Calu3 (cell line): ENCODE measurements at regions of chr11 and their contacts with region 1.

Region 1: DNA sequence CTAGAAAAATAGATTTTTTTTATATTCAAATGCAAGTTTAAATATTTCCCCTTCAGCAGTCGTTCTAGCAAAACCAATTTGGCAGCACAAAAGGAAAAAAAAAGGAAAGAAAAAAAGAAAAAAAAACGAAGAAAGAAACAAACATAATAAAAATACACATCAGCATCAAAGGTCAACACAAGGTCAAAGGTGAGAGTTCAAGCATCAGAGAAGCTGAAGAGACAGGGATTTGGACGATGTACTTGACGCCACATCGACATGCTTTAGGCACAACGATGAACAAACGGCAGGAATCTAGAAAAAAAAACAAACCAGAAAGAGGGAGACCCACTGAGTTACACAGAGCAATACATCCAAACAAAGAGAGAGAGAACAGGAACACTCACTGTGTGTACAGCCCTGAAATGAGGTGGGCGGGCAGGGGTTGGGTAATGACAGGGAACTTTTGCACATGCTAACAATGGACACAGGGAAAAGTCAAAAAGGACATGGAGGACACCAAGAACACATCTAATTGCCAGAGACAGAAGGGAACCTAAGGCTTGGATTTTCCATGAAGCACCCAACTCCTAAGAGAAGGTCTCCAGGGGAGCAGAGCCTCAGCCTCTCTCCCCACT is 19.8 kb upstream of the RAPSN start:
- DNase-seq: no peak
- H3K4me3 Mint-ChIP-seq: no peak overlapping the region
- H3K27ac Mint-ChIP-seq: no peak overlapping the region
- H3K4me1 Mint-ChIP-seq: no peaks in the 10 kb centered on the region
- H3K27me3 Mint-ChIP-seq: no peaks in the 10 kb centered on the region
- CTCF ChIP-seq: no peak

Region 2: DNA sequence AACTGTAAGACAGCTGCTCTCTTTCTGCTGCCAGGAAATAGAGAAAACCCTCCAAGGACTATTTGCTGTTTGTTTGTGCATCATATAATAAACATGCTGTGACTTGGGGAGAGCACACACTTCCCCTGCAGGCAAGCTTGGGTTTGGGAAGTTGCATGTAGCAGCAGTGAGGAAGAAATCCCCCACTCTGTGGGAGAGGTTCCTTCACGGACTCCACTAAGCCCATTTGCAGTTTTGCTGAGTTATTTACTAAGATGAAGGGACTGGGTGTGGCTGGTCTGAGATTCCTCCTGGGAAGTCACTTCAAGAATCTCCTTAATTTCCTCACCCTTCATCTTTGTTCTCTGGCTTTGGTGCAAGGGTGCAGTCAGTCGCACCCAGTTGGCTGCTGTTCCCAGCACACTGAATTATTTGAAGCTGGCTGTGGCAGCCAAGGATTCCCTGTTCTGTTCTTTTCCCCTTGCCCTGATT is 396.9 kb before region 1 on chr11:
- CTCF ChIA-PET with region 1: interaction called, 11 read pairs
- intact Hi-C with region 1: no loop called
- DNase-seq: no peak
- H3K4me3 Mint-ChIP-seq: no peak overlapping the region
- H3K27ac Mint-ChIP-seq: no peak overlapping the region
- H3K4me1 Mint-ChIP-seq: peaks cover 10% of the 10 kb centered on the region
- H3K27me3 Mint-ChIP-seq: no peaks in the 10 kb centered on the region
- CTCF ChIP-seq: no peak